ENCODE measurements at regions of chr9 and their contacts with region 1.

Region 1: GRCh38 chr9:73073337-73074175 is 78.1 kb upstream of the ANXA1 start:
- DNase-seq: no peak
- ATAC-seq: no peak
- H3K4me3 ChIP-seq: no peak overlapping the region
- H3K27ac ChIP-seq: peak overlapping the region in 1 of 2 donors; percentile 82
- H3K4me1 ChIP-seq: peaks cover 0 to 3% of the 10 kb centered on the region in 2 donors
- H3K27me3 ChIP-seq: no peaks in the 10 kb centered on the region

Region 2: DNA sequence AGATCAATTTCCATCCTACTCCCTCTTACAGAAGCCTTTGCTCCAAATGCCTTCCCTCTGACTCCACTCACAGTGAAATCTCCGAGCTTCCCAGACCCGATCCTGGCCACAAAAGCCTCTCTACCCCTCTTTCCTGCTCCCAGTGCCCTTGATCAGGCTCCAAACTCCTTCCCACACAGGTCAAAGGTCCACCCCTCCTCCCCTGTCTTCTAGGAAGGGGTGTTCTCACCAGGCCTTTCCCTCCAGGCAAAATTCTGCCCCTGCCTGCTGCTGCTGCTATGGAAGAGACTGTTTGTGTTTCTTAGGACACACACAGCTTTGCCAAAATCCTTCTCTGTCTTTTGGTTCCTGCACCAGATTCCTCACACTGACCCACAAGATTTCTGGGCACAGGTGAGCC is 34.9 kb before region 1 on chr9:
- intact Hi-C with region 1: loop called (anchors 5 kb)
- DNase-seq: peak; percentile 54 to 72
- ATAC-seq: peak; percentile 81
- H3K4me3 ChIP-seq: no peak overlapping the region
- H3K27ac ChIP-seq: peak overlapping the region; percentile 67 to 97
- H3K4me1 ChIP-seq: peaks cover 0 to 10% of the 10 kb centered on the region in 2 donors
- H3K27me3 ChIP-seq: no peaks in the 10 kb centered on the region

Region 3: DNA sequence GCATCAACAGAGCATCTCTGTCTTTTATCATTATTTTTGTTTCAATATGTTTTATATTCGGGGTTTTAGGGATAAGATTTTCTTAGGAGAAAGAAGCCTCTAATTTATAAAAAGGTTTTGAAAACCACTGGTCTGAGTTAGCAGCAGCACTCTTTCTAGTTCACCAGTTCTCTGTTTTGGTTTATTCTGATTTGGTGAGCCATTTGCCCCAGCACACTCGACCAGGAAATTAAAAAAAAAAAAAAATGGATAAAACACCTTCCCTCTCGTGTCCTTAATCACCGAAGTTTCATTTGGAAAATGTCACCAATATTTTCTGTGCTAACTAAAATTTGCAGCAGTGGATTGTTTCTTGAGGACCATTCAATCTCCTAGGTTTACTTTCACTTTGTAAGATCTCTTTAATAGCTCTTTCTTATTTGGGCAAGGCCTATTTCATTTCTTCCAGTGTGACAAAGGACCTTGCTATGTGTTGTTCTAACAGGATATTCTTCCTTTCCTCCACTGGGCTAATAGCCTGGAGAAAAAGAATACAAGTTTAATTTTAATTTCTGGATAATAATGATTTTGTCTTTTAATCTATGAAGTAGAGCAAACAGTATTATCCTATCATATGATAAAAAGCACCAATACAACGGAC is 20.3 kb after region 1 on chr9:
- intact Hi-C with region 1: no loop called
- DNase-seq: no peak
- ATAC-seq: peak; percentile 71
- H3K4me3 ChIP-seq: peak overlapping the region; percentile 43 to 59
- H3K27ac ChIP-seq: peak overlapping the region in 1 of 2 donors; percentile 67
- H3K4me1 ChIP-seq: peaks cover 0 to 3% of the 10 kb centered on the region in 2 donors
- H3K27me3 ChIP-seq: no peaks in the 10 kb centered on the region